Activated B cell treated with CpG ODN at 0.5 μM for 24 hours (primary cell): ENCODE measurements at regions of chr16 and their contacts with region 1.

Region 1: GRCh38 chr16:11297492-11298142 is 16.5 kb upstream of the PRM1 start:
- DNase-seq: peak; percentile 85
- ATAC-seq: peak; percentile 97
- H3K4me3 Mint-ChIP-seq: peak overlapping the region; percentile 73
- H3K27ac Mint-ChIP-seq: peak overlapping the region; percentile 85
- H3K4me1 Mint-ChIP-seq: peaks cover 72% of the 10 kb centered on the region
- H3K27me3 Mint-ChIP-seq: no peaks in the 10 kb centered on the region
- CTCF ChIP-seq: no peak

Region 2: GRCh38 chr16:11283820-11284248 is 13.8 kb before region 1 on chr16:
- CTCF ChIA-PET with region 1: interaction called, 7 read pairs
- POLR2A ChIA-PET with region 1: interaction called, 14 read pairs
- intact Hi-C with region 1: loop called (anchors 1 kb)
- DNase-seq: no peak
- ATAC-seq: no peak
- H3K4me3 Mint-ChIP-seq: no peak overlapping the region
- H3K27ac Mint-ChIP-seq: no peak overlapping the region
- H3K4me1 Mint-ChIP-seq: peaks cover 46% of the 10 kb centered on the region
- H3K27me3 Mint-ChIP-seq: no peaks in the 10 kb centered on the region
- CTCF ChIP-seq: no peak

Region 3: DNA sequence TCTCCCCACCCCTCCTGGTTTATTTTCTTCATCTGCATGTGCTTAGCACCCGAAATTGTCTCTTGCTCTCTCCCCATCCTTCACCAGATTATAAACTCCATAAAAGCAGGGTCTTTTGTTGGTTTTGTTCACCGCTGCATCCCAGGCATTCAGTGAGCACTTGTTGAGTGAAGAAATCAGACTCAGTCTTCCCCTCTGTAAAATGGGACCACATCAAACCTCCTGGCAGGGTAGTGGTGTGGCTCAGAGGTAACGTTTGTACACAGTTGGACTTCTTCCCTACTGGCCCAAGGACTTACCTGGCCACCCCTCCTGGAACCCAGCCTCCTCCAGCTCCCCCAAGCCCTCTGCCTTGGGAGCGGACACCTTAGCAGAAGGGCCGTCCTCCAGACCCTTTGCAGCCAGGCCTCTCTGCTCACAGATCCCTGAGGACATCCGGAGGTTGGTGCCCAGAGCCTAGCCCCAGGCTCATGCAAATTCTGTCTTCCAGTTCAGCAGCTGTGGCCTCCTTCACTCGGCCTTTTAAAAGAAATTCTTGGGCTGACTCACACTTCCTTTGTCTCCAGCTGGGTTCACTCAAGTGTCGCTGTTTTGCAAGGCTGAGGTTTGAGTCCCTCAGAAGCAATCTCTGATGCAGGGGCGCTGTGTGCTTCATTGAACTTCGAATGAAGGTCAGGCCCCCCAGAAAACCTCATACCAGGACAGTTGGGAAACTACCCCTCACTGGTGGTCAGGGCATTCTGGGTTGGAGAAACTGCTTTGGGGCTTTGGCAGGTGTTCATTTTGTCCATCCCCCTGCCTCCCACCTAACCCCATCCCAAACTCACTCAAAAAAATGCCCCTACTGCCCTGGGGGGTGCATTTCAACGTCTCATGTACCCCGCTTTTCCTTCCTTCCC is 30.8 kb after region 1 on chr16:
- CTCF ChIA-PET with region 1: interaction called, 28 read pairs
- POLR2A ChIA-PET with region 1: interaction called, 105 read pairs
- intact Hi-C with region 1: loop called (anchors 1 kb)
- DNase-seq: peak; percentile 66
- ATAC-seq: peak; percentile 65
- H3K4me3 Mint-ChIP-seq: peak overlapping the region; percentile 80
- H3K27ac Mint-ChIP-seq: peak overlapping the region; percentile 94
- H3K4me1 Mint-ChIP-seq: peaks cover 72% of the 10 kb centered on the region
- H3K27me3 Mint-ChIP-seq: no peaks in the 10 kb centered on the region
- CTCF ChIP-seq: no peak

Region 4: GRCh38 chr16:11370084-11370931 is 72.7 kb after region 1 on chr16:
- CTCF ChIA-PET with region 1: interaction called, 21 read pairs
- POLR2A ChIA-PET with region 1: interaction called, 30 read pairs
- intact Hi-C with region 1: no loop called
- DNase-seq: peak; percentile 53
- ATAC-seq: peak; percentile 96
- H3K4me3 Mint-ChIP-seq: peak overlapping the region; percentile 69
- H3K27ac Mint-ChIP-seq: peak overlapping the region; percentile 80
- H3K4me1 Mint-ChIP-seq: peaks cover 40% of the 10 kb centered on the region
- H3K27me3 Mint-ChIP-seq: no peaks in the 10 kb centered on the region
- CTCF ChIP-seq: no peak